H1 (cell line): ENCODE measurements at regions of chr18 and their contacts with region 1.

Region 1: GRCh38 chr18:74163019-74163660 is 14.8 kb downstream of the TIMM21 start:
- DNase-seq: no peak
- H3K4me3 ChIP-seq: no peak overlapping the region
- H3K27ac ChIP-seq: no peak overlapping the region
- H3K4me1 ChIP-seq: no peaks in the 10 kb centered on the region
- H3K27me3 ChIP-seq: no peaks in the 10 kb centered on the region; a peak in 2 of 7 replicates
- CTCF ChIP-seq: no peak
- EP300 ChIP-seq: no peak
- POLR2A ChIP-seq: no peak
- RAD21 ChIP-seq: no peak

Region 2: DNA sequence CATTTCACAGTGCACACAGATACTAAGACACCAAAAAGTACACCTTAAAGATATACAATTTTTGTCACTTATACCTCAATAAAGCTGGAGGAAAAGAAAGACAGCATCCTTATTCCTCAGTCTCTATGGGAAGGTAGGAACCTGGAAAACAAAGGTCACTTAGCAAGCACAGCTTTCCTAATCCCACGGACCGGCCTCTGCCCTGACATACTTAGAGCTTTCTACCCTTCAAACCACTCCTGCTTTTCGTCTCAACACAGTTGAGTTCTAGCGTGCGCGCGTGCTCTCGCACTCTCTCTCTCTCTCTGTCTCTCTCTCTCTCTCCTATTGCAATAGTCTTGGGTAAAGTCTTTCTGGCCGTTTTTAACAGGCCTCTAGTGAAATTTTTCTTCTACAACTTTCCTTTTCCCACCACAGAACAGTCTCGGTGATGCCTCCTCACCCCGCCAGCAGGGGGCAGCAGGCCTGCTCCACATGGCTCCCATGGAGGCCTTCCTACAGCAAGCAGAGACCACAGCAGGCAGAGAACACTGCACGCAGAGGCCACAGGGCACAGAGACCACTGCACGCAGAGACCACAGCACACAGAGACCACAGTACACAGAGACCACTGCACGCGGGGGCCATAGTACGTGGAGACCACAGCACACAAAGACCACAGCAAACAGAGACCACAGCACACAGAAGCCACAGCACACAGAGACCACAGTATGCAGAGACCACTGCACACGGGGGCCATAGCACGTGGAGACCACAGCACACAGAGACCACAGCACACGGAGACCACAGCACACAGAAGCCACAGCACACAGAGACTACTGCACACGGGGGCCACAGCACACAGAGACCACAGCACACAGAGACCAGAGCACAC is 122.4 kb before region 1 on chr18:
- CTCF ChIA-PET with region 1: no interaction called
- POLR2A ChIA-PET with region 1: no interaction called
- DNase-seq: peak in 1 of 2 experiments; percentile 88
- H3K4me3 ChIP-seq: no peak overlapping the region
- H3K27ac ChIP-seq: no peak overlapping the region
- H3K4me1 ChIP-seq: peaks cover 0 to 5% (median 2%) of the 10 kb centered on the region in 4 experiments; a peak in 3 of 7 replicates
- H3K27me3 ChIP-seq: no peaks in the 10 kb centered on the region
- CTCF ChIP-seq: peak; percentile 79 to 87 (median 80)
- EP300 ChIP-seq: no peak
- POLR2A ChIP-seq: no peak
- RAD21 ChIP-seq: peak; percentile 61 to 73

Region 3: DNA sequence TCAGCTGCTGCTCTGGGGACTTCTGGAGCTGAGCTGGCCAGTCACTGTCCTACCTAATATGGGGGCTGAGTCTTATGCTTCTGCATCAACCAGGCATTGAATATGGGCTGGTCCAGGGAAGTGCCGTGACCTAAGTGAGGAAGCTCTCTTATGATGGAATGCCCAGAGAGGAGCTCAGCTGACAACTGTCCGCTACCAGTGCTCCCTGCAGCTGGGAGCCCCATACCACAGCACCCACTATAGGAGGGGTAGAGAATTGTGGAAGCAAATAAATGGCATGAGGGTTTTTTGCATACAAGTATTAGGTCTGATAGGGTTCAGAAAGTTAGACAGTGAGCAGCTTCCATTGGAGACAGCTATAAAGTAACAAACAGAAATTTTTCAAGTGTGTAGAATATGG is 10.3 kb before region 1 on chr18:
- CTCF ChIA-PET with region 1: interaction called, 30 read pairs
- POLR2A ChIA-PET with region 1: interaction called, 6 read pairs
- DNase-seq: no peak
- H3K4me3 ChIP-seq: no peak overlapping the region
- H3K27ac ChIP-seq: no peak overlapping the region
- H3K4me1 ChIP-seq: peaks cover 0 to 6% (median 1%) of the 10 kb centered on the region in 4 experiments; a peak in 4 of 7 replicates
- H3K27me3 ChIP-seq: no peaks in the 10 kb centered on the region
- CTCF ChIP-seq: peak; percentile 38 to 56 (median 46)
- EP300 ChIP-seq: no peak
- POLR2A ChIP-seq: no peak
- RAD21 ChIP-seq: peak; percentile 27 to 53; a peak in 3 of 4 replicates